Activated CD4-positive, alpha-beta memory T cell treated with anti-CD3 and anti-CD28 coated beads, Interleukin-2, amount 10 ng/mL, durations not matched to agents 7 days and 5 days (primary cell): ENCODE measurements at regions of chr5 and their contacts with region 1.

Region 1: DNA sequence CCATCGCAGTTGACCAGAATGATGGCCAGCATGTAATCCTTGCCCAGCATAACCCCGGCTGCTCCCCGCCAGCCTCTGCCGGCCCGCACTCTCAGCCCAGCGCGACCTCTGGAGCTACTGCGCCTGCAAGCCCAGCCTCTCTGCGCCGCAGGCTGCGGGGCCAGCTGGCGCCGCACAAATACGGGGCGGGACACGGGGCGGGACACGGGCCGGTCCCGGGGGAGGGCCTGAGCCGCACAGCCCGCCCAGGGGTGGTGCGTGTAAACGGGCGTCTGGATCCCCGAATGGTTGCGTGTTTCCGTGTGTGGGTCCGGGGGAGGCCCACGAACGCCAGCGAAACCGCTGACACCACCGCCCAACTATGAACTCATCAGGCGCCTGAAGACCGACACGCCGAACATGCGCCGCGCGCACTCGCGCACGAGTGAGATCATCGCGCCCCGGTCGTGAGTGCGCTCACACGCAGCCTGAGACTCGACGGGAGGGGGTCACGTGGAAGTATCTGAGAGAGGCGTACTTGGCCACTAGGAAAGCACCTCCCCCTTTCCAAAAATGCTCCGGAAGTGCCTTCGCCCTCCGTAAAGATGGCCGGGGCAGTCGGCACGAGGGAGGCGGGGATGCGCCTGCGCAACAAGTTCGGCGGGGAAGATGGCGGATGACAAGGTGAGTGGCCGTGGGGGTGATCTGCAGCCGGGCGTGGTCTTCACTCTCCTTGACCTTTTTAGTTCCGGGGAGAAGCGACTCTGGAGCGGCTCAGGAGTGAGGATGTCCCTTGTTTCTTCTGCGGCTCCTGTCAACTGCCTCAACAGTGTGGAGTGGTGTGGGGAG is at the starts of genes APBB3 and SLC35A4:
- DNase-seq: peak; percentile 98
- H3K4me3 Mint-ChIP-seq: peak within 1 kb of the TSS; percentile 93
- H3K27ac Mint-ChIP-seq: peak within 1 kb of the TSS; percentile 89
- H3K4me1 Mint-ChIP-seq: peaks cover 67% of the 10 kb centered on the region
- H3K27me3 Mint-ChIP-seq: no peaks in the 10 kb centered on the region
- total RNA-seq, gene APBB3: 23.7 to 27.5 TPM
- total RNA-seq, gene SLC35A4: 78.9 to 82.1 TPM

Region 2: GRCh38 chr5:140575309-140575708 is 10.9 kb after region 1 on chr5:
- CTCF ChIA-PET with region 1: interaction called, 3 read pairs
- POLR2A ChIA-PET with region 1: interaction called, 11 read pairs
- DNase-seq: no peak
- H3K4me3 Mint-ChIP-seq: no peak overlapping the region
- H3K27ac Mint-ChIP-seq: no peak overlapping the region
- H3K4me1 Mint-ChIP-seq: peaks cover under 1% of the 10 kb centered on the region
- H3K27me3 Mint-ChIP-seq: peaks cover 1% of the 10 kb centered on the region

Region 3: DNA sequence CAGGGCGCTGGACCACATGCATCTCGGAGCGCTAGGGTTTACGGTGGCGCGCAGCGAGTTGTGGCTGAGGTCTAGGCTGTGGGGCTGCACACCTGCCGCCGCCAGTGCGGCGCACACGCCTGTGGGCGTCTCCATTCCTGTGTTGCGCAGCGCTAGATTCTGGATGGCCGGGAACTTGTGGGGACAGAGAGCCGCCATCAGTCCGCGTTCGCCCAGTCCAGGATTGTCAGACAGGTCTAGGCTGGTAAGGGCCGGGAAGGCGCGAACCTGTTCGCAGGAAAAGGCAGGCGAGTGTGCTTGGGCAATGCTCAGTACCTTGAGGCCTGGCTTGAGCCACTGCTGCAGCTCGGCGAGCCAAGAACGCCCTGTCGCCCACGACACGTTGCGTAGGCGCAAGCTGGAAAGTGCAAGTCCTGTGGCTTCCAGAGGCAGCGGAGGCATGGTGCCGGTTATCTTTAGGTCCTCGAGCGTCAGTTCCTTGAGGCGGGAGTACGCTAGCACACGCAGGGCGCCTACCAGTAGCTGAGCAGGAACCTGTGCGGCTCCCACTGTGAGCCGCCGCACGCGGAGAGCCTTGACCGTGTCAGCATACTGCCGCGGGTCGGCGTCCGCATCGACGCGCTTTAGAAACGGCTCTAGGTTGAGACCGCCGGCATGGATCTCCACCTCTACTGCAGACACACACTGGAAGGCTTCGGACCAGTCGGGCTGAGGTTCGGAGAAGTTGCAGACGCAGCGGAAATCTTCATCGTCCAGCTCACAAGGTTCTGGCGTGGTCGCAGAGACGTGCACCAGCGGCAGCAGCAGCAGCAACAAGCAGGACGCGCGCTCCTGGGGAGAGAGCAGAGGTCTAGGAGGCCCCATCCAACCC is 68.0 kb after region 1 on chr5:
- CTCF ChIA-PET with region 1: interaction called, 12 read pairs
- POLR2A ChIA-PET with region 1: interaction called, 4 read pairs
- DNase-seq: peak; percentile 52
- H3K4me3 Mint-ChIP-seq: peak overlapping the region; percentile 77
- H3K27ac Mint-ChIP-seq: no peak overlapping the region
- H3K4me1 Mint-ChIP-seq: peaks cover 36% of the 10 kb centered on the region
- H3K27me3 Mint-ChIP-seq: peaks cover 29% of the 10 kb centered on the region

Region 4: GRCh38 chr5:140639148-140639979 is 75.0 kb after region 1 on chr5 and contains the start of gene TMCO6:
- CTCF ChIA-PET with region 1: interaction called, 12 read pairs
- POLR2A ChIA-PET with region 1: interaction called, 13 read pairs
- DNase-seq: peak; percentile 97
- H3K4me3 Mint-ChIP-seq: peak within 1 kb of the TSS; percentile 97
- H3K27ac Mint-ChIP-seq: peak within 1 kb of the TSS; percentile 89
- H3K4me1 Mint-ChIP-seq: peaks cover 48% of the 10 kb centered on the region
- H3K27me3 Mint-ChIP-seq: no peaks in the 10 kb centered on the region
- total RNA-seq, gene TMCO6: 28.9 to 29.0 TPM